SK-N-SH (cell line): ENCODE measurements at regions of chr17 and their contacts with region 1.

Region 1: DNA sequence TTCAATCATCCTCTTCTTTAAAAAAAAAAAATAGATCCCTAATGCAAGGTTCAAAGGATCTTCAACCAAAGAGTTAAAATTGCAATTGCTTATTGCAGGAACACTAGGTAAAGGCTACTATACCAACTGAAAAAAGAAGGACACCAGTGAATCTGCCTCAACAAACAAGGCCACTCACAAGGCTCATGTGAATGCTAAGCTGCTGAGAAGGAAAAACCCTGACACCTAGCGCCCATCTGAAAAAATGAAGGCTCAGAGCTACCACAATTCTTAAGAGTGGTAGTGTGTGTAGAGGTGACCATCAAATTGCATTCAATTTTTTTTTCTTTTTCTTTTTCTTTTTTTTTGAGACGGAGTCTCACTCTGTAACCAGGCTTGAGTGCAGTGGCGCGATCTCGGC is 201.6 kb upstream of the C17orf78 start:
- DNase-seq: peak; percentile 61
- H3K4me3 ChIP-seq: no peak overlapping the region
- H3K27ac ChIP-seq: no peak overlapping the region
- H3K4me1 ChIP-seq: peaks cover 0 to 14% of the 10 kb centered on the region in 2 experiments; a peak in 3 of 4 replicates
- H3K27me3 ChIP-seq: no peaks in the 10 kb centered on the region
- CTCF ChIP-seq: peak; percentile 42
- EP300 ChIP-seq: no peak
- RAD21 ChIP-seq: peak; percentile 91

Region 2: DNA sequence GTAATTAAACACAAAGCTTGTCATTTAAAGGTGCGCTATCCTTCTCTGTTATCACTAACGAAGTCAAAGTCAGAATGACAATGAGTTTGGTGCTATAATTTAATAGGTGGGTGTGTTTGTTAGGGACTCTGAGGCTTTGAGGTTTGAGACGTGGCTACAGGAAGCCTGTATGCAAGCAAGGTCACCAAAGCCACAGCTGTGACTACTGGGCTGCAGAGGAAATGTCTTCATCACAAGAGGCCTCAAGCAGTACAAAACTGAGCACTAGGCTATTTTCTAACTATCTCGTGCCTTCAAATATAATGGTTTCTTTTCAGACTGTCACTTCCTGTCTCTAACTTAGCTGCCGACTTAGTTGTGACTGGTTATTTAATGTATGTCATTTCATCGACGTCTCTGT is 84.2 kb before region 1 on chr17:
- CTCF ChIA-PET with region 1: interaction called, 42 read pairs
- POLR2A ChIA-PET with region 1: no interaction called
- DNase-seq: no peak
- H3K4me3 ChIP-seq: no peak overlapping the region
- H3K27ac ChIP-seq: no peak overlapping the region
- H3K4me1 ChIP-seq: peaks cover 0 to 16% of the 10 kb centered on the region in 2 experiments; a peak in 1 of 4 replicates
- H3K27me3 ChIP-seq: no peaks in the 10 kb centered on the region
- CTCF ChIP-seq: no peak
- EP300 ChIP-seq: no peak
- RAD21 ChIP-seq: no peak

Region 3: GRCh38 chr17:37096071-37096470 is 78.1 kb before region 1 on chr17:
- CTCF ChIA-PET with region 1: interaction called, 42 read pairs
- POLR2A ChIA-PET with region 1: no interaction called
- DNase-seq: no peak
- H3K4me3 ChIP-seq: no peak overlapping the region
- H3K27ac ChIP-seq: no peak overlapping the region
- H3K4me1 ChIP-seq: peaks cover 0 to 23% of the 10 kb centered on the region in 2 experiments; a peak in 1 of 4 replicates
- H3K27me3 ChIP-seq: no peaks in the 10 kb centered on the region
- CTCF ChIP-seq: no peak
- EP300 ChIP-seq: no peak
- RAD21 ChIP-seq: no peak

Region 4: GRCh38 chr17:37134050-37134449 is 40.2 kb before region 1 on chr17:
- CTCF ChIA-PET with region 1: interaction called, 13 read pairs
- POLR2A ChIA-PET with region 1: no interaction called
- DNase-seq: peak; percentile 54
- H3K4me3 ChIP-seq: no peak overlapping the region
- H3K27ac ChIP-seq: peak overlapping the region in 1 of 2 experiments; percentile 96; a peak in 2 of 4 replicates
- H3K4me1 ChIP-seq: peaks cover 0 to 47% of the 10 kb centered on the region in 2 experiments; a peak in 2 of 4 replicates
- H3K27me3 ChIP-seq: no peaks in the 10 kb centered on the region
- CTCF ChIP-seq: no peak
- EP300 ChIP-seq: peak in 1 of 2 experiments; percentile 86; a peak in 2 of 4 replicates
- RAD21 ChIP-seq: peak; percentile 45

Region 5: GRCh38 chr17:37147301-37147812 is 26.8 kb before region 1 on chr17:
- CTCF ChIA-PET with region 1: interaction called, 10 read pairs
- POLR2A ChIA-PET with region 1: interaction called, 4 read pairs
- DNase-seq: no peak
- H3K4me3 ChIP-seq: no peak overlapping the region
- H3K27ac ChIP-seq: peak overlapping the region; percentile 2 to 78; a peak in 3 of 4 replicates
- H3K4me1 ChIP-seq: peaks cover 11 to 32% of the 10 kb centered on the region in 2 experiments; a peak in 3 of 4 replicates
- H3K27me3 ChIP-seq: no peaks in the 10 kb centered on the region
- CTCF ChIP-seq: no peak
- EP300 ChIP-seq: no peak
- RAD21 ChIP-seq: no peak

Region 6: GRCh38 chr17:37162800-37163199 is 11.4 kb before region 1 on chr17:
- CTCF ChIA-PET with region 1: interaction called, 12 read pairs
- POLR2A ChIA-PET with region 1: no interaction called
- DNase-seq: no peak
- H3K4me3 ChIP-seq: no peak overlapping the region
- H3K27ac ChIP-seq: no peak overlapping the region
- H3K4me1 ChIP-seq: peaks cover 0 to 3% of the 10 kb centered on the region in 2 experiments; a peak in 1 of 4 replicates
- H3K27me3 ChIP-seq: no peaks in the 10 kb centered on the region
- CTCF ChIP-seq: no peak
- EP300 ChIP-seq: no peak
- RAD21 ChIP-seq: no peak

Region 7: DNA sequence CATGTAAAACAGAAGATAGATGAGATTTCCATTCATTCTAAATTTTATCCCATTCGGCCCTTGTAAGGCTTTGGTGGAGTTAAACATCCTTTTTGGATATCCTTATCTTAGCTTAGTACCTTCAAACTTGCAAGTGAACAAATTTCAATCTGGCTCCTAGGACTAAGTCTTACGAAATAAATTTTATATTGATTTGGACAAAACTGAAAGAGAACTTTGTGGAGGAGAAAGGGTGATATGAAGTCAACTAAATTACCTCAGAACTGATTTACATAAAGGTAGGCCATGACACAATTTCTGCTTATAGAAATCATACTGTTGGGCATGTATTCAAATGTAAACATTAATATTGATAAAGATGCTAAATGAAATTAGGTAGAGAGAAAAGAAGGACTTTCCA is 26.3 kb after region 1 on chr17:
- CTCF ChIA-PET with region 1: no interaction called
- POLR2A ChIA-PET with region 1: no interaction called
- DNase-seq: no peak
- H3K4me3 ChIP-seq: no peak overlapping the region
- H3K27ac ChIP-seq: no peak overlapping the region
- H3K4me1 ChIP-seq: no peaks in the 10 kb centered on the region
- H3K27me3 ChIP-seq: no peaks in the 10 kb centered on the region
- CTCF ChIP-seq: no peak
- EP300 ChIP-seq: no peak
- RAD21 ChIP-seq: no peak